ENCODE measurements at regions of chr9 and their contacts with region 1.

Region 1: GRCh38 chr9:130860458-130861316 is 25.6 kb downstream of the ABL1 start:
- DNase-seq: peak; percentile 55 to 95 (median 94)
- ATAC-seq: peak; percentile 87
- H3K4me3 ChIP-seq: no peak overlapping the region
- H3K27ac ChIP-seq: peak overlapping the region; percentile 6; the same call in 2 of the 3 replicates
- H3K4me1 ChIP-seq: peaks cover 10% of the 10 kb centered on the region in 2 experiments; a peak in 4 of 5 replicates
- H3K27me3 ChIP-seq: no peaks in the 10 kb centered on the region
- CTCF ChIP-seq: no peak
- EP300 ChIP-seq: no peak
- POLR2A ChIP-seq: no peak
- RAD21 ChIP-seq: no peak

Region 2: GRCh38 chr9:130707225-130707976 is 153.3 kb before region 1 on chr9:
- CTCF ChIA-PET with region 1: interaction called, 82 read pairs
- POLR2A ChIA-PET with region 1: interaction called, 6 read pairs
- in situ Hi-C with region 1: loop called (anchors 5 kb)
- intact Hi-C with region 1: loop called (anchors 1 kb)
- DNase-seq: peak in 1 of 4 experiments; percentile 75
- ATAC-seq: peak; percentile 68
- H3K4me3 ChIP-seq: no peak overlapping the region
- H3K27ac ChIP-seq: no peak overlapping the region
- H3K4me1 ChIP-seq: peaks cover 0 to 5% of the 10 kb centered on the region in 2 experiments; a peak in 1 of 5 replicates
- H3K27me3 ChIP-seq: no peaks in the 10 kb centered on the region
- CTCF ChIP-seq: peak; percentile 54 to 84 (median 75); a peak in 5 of 6 replicates
- EP300 ChIP-seq: no peak
- POLR2A ChIP-seq: peak; percentile 18
- RAD21 ChIP-seq: peak; percentile 60 to 67

Region 3: DNA sequence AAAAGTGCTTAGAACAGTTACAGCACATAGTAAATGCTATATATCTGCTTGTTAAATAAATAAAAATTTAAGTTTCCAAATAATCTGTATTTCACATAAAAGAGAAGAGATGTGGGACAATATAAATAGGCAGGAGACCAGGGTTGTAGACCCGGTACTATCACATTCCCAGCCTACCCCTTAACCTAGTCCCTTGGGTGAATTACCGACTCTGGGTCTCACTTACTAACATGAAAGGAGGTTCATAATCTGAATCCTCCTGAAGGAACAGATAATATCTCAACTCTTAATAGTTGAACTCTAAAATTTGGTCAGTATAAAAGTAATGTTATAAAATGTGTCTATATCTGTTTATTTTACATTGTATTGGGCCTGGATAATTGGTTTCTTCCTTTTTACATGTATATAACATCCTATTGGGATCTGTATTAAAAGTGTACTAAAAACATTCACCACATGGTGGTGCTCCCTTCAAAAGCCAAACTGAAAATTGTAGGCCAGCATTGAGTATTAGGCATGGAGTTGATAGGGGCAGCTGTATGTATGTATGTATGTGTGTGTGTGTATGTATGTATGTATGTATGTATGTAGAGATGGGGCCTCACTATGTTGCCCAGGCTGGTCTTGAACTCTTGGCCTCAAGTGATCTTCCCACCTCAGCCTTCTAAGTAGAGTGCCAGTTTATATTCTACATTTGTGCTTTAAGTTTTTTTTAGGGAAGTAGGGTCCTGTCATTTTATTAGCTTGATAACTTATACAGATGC is 89.8 kb before region 1 on chr9:
- CTCF ChIA-PET with region 1: interaction called, 636 read pairs
- POLR2A ChIA-PET with region 1: interaction called, 16 read pairs
- in situ Hi-C with region 1: loop called (anchors 5 kb)
- intact Hi-C with region 1: loop called (anchors 1 kb)
- DNase-seq: peak; percentile 91 to 98 (median 95)
- ATAC-seq: peak; percentile 89
- H3K4me3 ChIP-seq: no peak overlapping the region
- H3K27ac ChIP-seq: no peak overlapping the region
- H3K4me1 ChIP-seq: peaks cover 6 to 8% of the 10 kb centered on the region in 2 experiments; a peak in 4 of 5 replicates
- H3K27me3 ChIP-seq: no peaks in the 10 kb centered on the region
- CTCF ChIP-seq: no peak
- EP300 ChIP-seq: no peak
- POLR2A ChIP-seq: no peak
- RAD21 ChIP-seq: no peak

Region 4: DNA sequence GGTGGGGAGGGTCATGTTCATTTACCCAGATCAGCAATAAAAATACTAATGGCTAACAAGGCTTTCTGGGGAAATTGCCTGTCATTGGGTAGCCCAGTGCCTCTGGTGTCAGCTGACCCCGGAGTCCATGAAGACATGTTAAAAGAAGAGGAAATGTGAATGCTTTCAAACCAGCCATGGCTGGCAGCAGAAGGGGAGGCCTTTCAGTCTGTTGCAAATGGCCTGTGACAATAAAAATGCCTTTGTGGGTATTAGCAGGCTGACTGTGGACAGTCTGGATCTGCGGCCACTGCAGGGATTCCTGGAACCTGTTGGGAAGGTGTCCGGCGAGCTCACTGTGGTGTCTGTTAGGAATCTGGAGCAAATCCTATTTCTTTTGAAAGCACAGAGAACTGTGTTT is 18.1 kb before region 1 on chr9:
- CTCF ChIA-PET with region 1: interaction called, 4 read pairs
- POLR2A ChIA-PET with region 1: interaction called, 147 read pairs
- in situ Hi-C with region 1: no loop called
- intact Hi-C with region 1: no loop called
- DNase-seq: peak in 1 of 4 experiments; percentile 37
- ATAC-seq: no peak
- H3K4me3 ChIP-seq: no peak overlapping the region
- H3K27ac ChIP-seq: no peak overlapping the region
- H3K4me1 ChIP-seq: peaks cover 26 to 29% of the 10 kb centered on the region in 2 experiments
- H3K27me3 ChIP-seq: no peaks in the 10 kb centered on the region
- CTCF ChIP-seq: no peak
- EP300 ChIP-seq: no peak
- POLR2A ChIP-seq: no peak
- RAD21 ChIP-seq: no peak

Region 5: GRCh38 chr9:130877300-130877699 is 16.6 kb after region 1 on chr9:
- CTCF ChIA-PET with region 1: interaction called, 6 read pairs
- POLR2A ChIA-PET with region 1: interaction called, 220 read pairs
- in situ Hi-C with region 1: no loop called
- intact Hi-C with region 1: no loop called
- DNase-seq: peak in 2 of 4 experiments; percentile 61 to 65
- ATAC-seq: no peak
- H3K4me3 ChIP-seq: no peak overlapping the region
- H3K27ac ChIP-seq: no peak overlapping the region
- H3K4me1 ChIP-seq: no peaks in the 10 kb centered on the region
- H3K27me3 ChIP-seq: no peaks in the 10 kb centered on the region
- CTCF ChIP-seq: no peak
- EP300 ChIP-seq: no peak
- POLR2A ChIP-seq: no peak
- RAD21 ChIP-seq: no peak

Region 6: GRCh38 chr9:130927995-130928900 is 67.6 kb after region 1 on chr9:
- CTCF ChIA-PET with region 1: no interaction called
- POLR2A ChIA-PET with region 1: no interaction called
- in situ Hi-C with region 1: no loop called
- intact Hi-C with region 1: no loop called
- DNase-seq: peak in 3 of 4 experiments; percentile 64 to 73 (median 66)
- ATAC-seq: no peak
- H3K4me3 ChIP-seq: no peak overlapping the region
- H3K27ac ChIP-seq: no peak overlapping the region
- H3K4me1 ChIP-seq: peaks cover 0 to 52% of the 10 kb centered on the region in 2 experiments; a peak in 2 of 5 replicates
- H3K27me3 ChIP-seq: peaks cover 95 to 100% of the 10 kb centered on the region in 2 experiments
- CTCF ChIP-seq: no peak
- EP300 ChIP-seq: no peak
- POLR2A ChIP-seq: no peak
- RAD21 ChIP-seq: no peak